ENCODE measurements at regions of chr1 and their contacts with region 1.

Region 1: GRCh38 chr1:203340112-203340804 is 10.7 kb downstream of the FMOD start:
- DNase-seq: peak in 8 of 9 experiments; percentile 35 to 83 (median 60)
- ATAC-seq: peak; percentile 72
- H3K4me3 ChIP-seq: no peak overlapping the region
- H3K4me3 Mint-ChIP-seq: no peak overlapping the region
- H3K27ac ChIP-seq: no peak overlapping the region
- H3K27ac Mint-ChIP-seq: no peak overlapping the region
- H3K4me1 ChIP-seq: peaks cover 16% of the 10 kb centered on the region
- H3K4me1 Mint-ChIP-seq: peaks cover 25% of the 10 kb centered on the region
- H3K27me3 ChIP-seq: no peaks in the 10 kb centered on the region
- H3K27me3 Mint-ChIP-seq: peaks cover 8% of the 10 kb centered on the region
- CTCF ChIP-seq: peak; percentile 91

Region 2: GRCh38 chr1:203069030-203069747 is 271.1 kb before region 1 on chr1:
- CTCF ChIA-PET with region 1: no interaction called
- POLR2A ChIA-PET with region 1: no interaction called
- intact Hi-C with region 1: no loop called
- DNase-seq: no peak
- ATAC-seq: no peak
- H3K4me3 ChIP-seq: no peak overlapping the region
- H3K4me3 Mint-ChIP-seq: no peak overlapping the region
- H3K27ac ChIP-seq: no peak overlapping the region
- H3K27ac Mint-ChIP-seq: no peak overlapping the region
- H3K4me1 ChIP-seq: no peaks in the 10 kb centered on the region
- H3K4me1 Mint-ChIP-seq: no peaks in the 10 kb centered on the region
- H3K27me3 ChIP-seq: peaks cover 0 to 4% of the 10 kb centered on the region in 2 experiments
- H3K27me3 Mint-ChIP-seq: peaks cover 14% of the 10 kb centered on the region
- CTCF ChIP-seq: no peak

Region 3: GRCh38 chr1:203273206-203273868 is 66.9 kb before region 1 on chr1:
- CTCF ChIA-PET with region 1: interaction called, 908 read pairs
- POLR2A ChIA-PET with region 1: interaction called, 12 read pairs
- intact Hi-C with region 1: loop called (anchors 1 kb)
- DNase-seq: peak; percentile 82 to 97 (median 92)
- ATAC-seq: peak; percentile 66
- H3K4me3 ChIP-seq: peak overlapping the region; percentile 37 to 63
- H3K4me3 Mint-ChIP-seq: peak overlapping the region; percentile 74
- H3K27ac ChIP-seq: peak overlapping the region; percentile 10 to 48
- H3K27ac Mint-ChIP-seq: peak overlapping the region; percentile 92
- H3K4me1 ChIP-seq: peaks cover 49% of the 10 kb centered on the region
- H3K4me1 Mint-ChIP-seq: peaks cover 52% of the 10 kb centered on the region
- H3K27me3 ChIP-seq: no peaks in the 10 kb centered on the region
- H3K27me3 Mint-ChIP-seq: no peaks in the 10 kb centered on the region
- CTCF ChIP-seq: peak; percentile 94

Region 4: DNA sequence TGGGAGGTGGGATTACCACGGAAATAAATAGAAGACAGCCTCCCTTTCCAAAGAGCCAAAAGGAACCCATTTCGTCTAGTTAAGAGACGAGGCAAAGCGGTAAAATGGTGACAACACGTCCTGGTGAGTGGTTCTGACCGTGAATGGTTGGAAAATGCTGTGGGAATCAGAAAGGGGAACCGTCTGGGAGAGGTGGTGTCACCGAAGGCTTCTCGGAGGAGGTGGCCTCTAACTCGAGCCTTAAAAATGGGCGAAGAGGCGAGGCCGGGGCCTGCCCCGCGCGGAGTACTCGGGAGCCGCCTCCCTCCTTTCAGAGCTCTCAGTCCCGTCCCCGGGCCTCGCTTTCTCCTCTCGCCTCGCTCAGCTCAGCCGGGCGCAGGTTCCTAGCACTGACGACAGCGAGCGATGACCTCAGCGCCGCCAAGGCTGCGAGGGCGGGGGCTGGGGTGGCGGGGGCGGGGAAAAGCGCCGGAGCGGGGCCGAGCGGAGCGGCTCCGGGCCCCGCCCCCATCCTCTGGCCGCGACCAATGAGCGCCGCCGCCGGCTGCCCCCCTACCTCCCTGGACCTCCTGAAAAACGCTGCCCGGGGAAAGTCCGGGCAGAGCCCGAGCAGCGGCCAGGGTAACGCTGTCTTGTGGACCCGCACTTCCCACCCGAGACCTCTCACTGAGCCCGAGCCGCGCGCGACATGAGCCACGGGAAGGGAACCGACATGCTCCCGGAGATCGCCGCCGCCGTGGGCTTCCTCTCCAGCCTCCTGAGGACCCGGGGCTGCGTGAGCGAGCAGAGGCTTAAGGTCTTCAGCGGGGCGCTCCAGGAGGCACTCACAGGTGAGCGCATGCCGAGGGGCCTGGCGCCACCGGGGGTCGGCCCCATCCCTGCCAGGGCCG is 35.1 kb before region 1 on chr1 and contains the start of gene BTG2:
- CTCF ChIA-PET with region 1: interaction called, 263 read pairs
- POLR2A ChIA-PET with region 1: interaction called, 46 read pairs
- intact Hi-C with region 1: loop called in 1 of 2 experiments (anchors 1 kb)
- DNase-seq: peak; percentile 79 to 97 (median 93)
- ATAC-seq: peak; percentile 80
- H3K4me3 ChIP-seq: peak within 1 kb of the TSS; percentile 98 to 99
- H3K4me3 Mint-ChIP-seq: peak within 1 kb of the TSS; percentile 94
- H3K27ac ChIP-seq: peak within 1 kb of the TSS; percentile 94 to 99
- H3K27ac Mint-ChIP-seq: peak within 1 kb of the TSS; percentile 97
- H3K4me1 ChIP-seq: peaks cover 44% of the 10 kb centered on the region
- H3K4me1 Mint-ChIP-seq: peaks cover 58% of the 10 kb centered on the region
- H3K27me3 ChIP-seq: no peaks in the 10 kb centered on the region
- H3K27me3 Mint-ChIP-seq: no peaks in the 10 kb centered on the region
- CTCF ChIP-seq: no peak
- total RNA-seq, gene BTG2: 751 to 765 TPM

Region 5: DNA sequence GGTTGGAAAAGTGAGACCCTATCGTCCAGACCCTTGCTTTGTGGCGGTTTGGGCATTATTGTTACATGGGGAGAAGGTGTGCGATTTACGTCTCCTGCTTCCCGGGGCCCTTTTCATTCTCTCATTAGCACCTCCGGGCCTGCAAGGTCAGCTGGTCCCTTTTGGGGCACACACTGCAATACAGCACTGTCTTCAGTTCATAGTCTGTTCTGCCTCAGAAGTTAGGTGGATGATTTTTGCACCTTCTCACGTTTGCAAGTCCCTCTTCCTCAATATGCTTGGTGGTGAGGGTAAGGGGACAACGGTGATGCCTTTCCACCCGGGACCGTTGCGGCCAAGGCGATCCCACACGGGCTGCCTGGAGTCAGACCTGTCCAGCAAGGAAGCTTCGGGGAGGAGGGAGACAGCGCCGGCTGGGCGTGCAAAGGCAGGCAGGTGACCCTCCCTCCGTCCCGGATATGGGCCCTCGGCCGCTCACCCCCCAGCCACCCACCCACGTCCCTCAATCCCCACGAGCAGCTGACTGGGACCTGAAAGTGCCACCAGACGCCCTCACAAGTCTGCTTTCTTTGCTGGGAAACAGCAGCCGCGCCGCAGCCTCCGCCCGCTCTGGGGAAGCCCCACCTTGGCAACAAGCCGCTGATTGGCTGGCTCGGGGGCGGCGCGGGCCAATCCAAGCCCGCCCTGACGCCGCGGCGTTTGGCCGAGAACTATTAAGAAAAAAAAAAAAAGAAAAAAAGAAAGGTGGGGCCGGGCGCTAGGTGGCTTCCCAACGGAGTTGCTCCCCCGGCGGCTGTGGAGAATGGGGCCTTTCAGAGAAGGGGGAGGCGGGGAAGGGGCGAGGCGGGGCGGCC is 13.2 kb before region 1 on chr1:
- CTCF ChIA-PET with region 1: interaction called, 218 read pairs
- POLR2A ChIA-PET with region 1: interaction called, 12 read pairs
- intact Hi-C with region 1: loop called in 1 of 2 experiments (anchors 1 kb)
- DNase-seq: peak; percentile 86 to 97 (median 94)
- ATAC-seq: peak; percentile 67
- H3K4me3 ChIP-seq: peak overlapping the region; percentile 58 to 60
- H3K4me3 Mint-ChIP-seq: peak overlapping the region; percentile 74
- H3K27ac ChIP-seq: peak overlapping the region; percentile 92 to 97
- H3K27ac Mint-ChIP-seq: peak overlapping the region; percentile 93
- H3K4me1 ChIP-seq: peaks cover 65% of the 10 kb centered on the region
- H3K4me1 Mint-ChIP-seq: peaks cover 65% of the 10 kb centered on the region
- H3K27me3 ChIP-seq: no peaks in the 10 kb centered on the region
- H3K27me3 Mint-ChIP-seq: no peaks in the 10 kb centered on the region
- CTCF ChIP-seq: no peak

Region 6: DNA sequence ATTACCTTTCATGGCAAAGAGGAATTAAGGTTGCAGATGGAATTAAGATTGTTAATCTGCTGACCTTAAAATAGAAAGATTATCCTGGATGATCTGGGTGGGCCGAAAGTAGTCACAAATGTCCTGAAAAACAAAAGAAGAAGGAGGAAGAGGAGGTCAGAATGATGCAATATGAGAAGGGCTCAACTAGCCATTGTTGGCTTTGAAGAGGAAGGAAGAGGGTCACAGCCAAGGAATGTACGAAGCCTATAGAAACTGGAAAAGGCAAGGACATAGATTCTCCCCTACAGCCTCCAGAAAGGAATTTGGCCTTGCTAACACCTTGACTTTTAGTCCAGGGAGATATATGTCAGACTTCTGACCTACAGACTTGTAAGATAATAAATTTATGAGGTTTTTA is 50.0 kb after region 1 on chr1:
- CTCF ChIA-PET with region 1: no interaction called
- POLR2A ChIA-PET with region 1: no interaction called
- intact Hi-C with region 1: no loop called
- DNase-seq: no peak
- ATAC-seq: no peak
- H3K4me3 ChIP-seq: no peak overlapping the region
- H3K4me3 Mint-ChIP-seq: no peak overlapping the region
- H3K27ac ChIP-seq: no peak overlapping the region
- H3K27ac Mint-ChIP-seq: no peak overlapping the region
- H3K4me1 ChIP-seq: no peaks in the 10 kb centered on the region
- H3K4me1 Mint-ChIP-seq: no peaks in the 10 kb centered on the region
- H3K27me3 ChIP-seq: peaks cover 0 to 2% of the 10 kb centered on the region in 2 experiments
- H3K27me3 Mint-ChIP-seq: peaks cover 28% of the 10 kb centered on the region
- CTCF ChIP-seq: no peak

Region 7: GRCh38 chr1:203486618-203487370 is 146.5 kb after region 1 on chr1:
- CTCF ChIA-PET with region 1: interaction called, 95 read pairs
- POLR2A ChIA-PET with region 1: no interaction called
- intact Hi-C with region 1: loop called (anchors 1 kb)
- DNase-seq: peak in 1 of 9 experiments; percentile 15
- ATAC-seq: no peak
- H3K4me3 ChIP-seq: peak overlapping the region in 1 of 2 experiments; percentile 65
- H3K4me3 Mint-ChIP-seq: peak overlapping the region; percentile 82
- H3K27ac ChIP-seq: peak overlapping the region in 1 of 2 experiments; percentile 6
- H3K27ac Mint-ChIP-seq: no peak overlapping the region
- H3K4me1 ChIP-seq: peaks cover 13% of the 10 kb centered on the region
- H3K4me1 Mint-ChIP-seq: peaks cover 10% of the 10 kb centered on the region
- H3K27me3 ChIP-seq: no peaks in the 10 kb centered on the region
- H3K27me3 Mint-ChIP-seq: no peaks in the 10 kb centered on the region
- CTCF ChIP-seq: no peak

Region 8: GRCh38 chr1:203776636-203777035 is 436.4 kb after region 1 on chr1:
- CTCF ChIA-PET with region 1: no interaction called
- POLR2A ChIA-PET with region 1: no interaction called
- intact Hi-C with region 1: no loop called
- DNase-seq: peak in 1 of 9 experiments; percentile 36
- ATAC-seq: no peak
- H3K4me3 ChIP-seq: no peak overlapping the region
- H3K4me3 Mint-ChIP-seq: no peak overlapping the region
- H3K27ac ChIP-seq: no peak overlapping the region
- H3K27ac Mint-ChIP-seq: peak overlapping the region; percentile 72
- H3K4me1 ChIP-seq: no peaks in the 10 kb centered on the region
- H3K4me1 Mint-ChIP-seq: peaks cover 10% of the 10 kb centered on the region
- H3K27me3 ChIP-seq: no peaks in the 10 kb centered on the region
- H3K27me3 Mint-ChIP-seq: no peaks in the 10 kb centered on the region
- CTCF ChIP-seq: no peak

Region 9: DNA sequence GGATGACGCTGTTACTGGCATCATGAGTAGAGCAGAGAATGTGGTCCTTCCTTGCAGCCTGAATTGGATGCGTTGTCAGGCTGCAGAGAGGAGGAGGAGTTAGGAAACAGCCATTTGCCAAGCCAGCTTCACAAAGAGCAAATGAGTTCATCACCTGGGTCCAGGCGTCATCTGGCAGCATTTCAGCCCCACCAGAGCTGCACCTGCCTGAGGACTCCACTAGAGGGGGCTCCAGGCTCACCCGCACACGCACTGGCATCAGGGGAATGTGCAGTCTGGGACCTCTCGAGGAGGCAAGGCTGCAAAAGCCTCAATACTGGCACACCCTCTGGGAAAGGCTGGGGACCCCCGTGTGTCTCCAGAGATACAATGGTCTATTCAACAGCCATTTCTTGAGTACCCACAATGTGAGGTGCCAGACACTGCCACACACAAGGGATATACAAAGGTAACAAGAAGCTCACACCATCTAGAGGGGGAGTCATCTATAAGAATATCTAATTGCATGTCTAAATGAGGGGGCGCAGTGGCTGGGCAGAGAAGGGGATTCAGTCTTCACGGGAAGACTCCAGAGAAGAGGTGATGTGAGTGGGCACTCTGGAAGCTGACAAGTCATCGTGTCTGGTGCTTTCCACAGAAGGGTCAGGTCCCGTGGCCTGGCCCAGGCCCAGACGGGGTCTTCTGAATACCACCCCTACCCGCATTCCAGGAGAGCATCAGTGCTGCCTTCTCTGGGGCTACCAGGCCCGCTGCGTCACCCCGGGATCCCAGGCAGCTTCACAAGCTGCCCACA is 1649.2 kb after region 1 on chr1:
- CTCF ChIA-PET with region 1: no interaction called
- POLR2A ChIA-PET with region 1: no interaction called
- intact Hi-C with region 1: no loop called
- DNase-seq: peak; percentile 10 to 67 (median 46)
- ATAC-seq: peak; percentile 87
- H3K4me3 ChIP-seq: no peak overlapping the region
- H3K4me3 Mint-ChIP-seq: no peak overlapping the region
- H3K27ac ChIP-seq: no peak overlapping the region
- H3K27ac Mint-ChIP-seq: no peak overlapping the region
- H3K4me1 ChIP-seq: peaks cover 4% of the 10 kb centered on the region
- H3K4me1 Mint-ChIP-seq: peaks cover 15% of the 10 kb centered on the region
- H3K27me3 ChIP-seq: no peaks in the 10 kb centered on the region
- H3K27me3 Mint-ChIP-seq: no peaks in the 10 kb centered on the region
- CTCF ChIP-seq: peak; percentile 63

Measured in CD8-positive, alpha-beta T cell (primary cell).